Activated naive CD4-positive, alpha-beta T cell treated with anti-CD3 and anti-CD28 coated beads for 36 hours (primary cell): ENCODE measurements at regions of chr2 and their contacts with region 1.

Region 1: DNA sequence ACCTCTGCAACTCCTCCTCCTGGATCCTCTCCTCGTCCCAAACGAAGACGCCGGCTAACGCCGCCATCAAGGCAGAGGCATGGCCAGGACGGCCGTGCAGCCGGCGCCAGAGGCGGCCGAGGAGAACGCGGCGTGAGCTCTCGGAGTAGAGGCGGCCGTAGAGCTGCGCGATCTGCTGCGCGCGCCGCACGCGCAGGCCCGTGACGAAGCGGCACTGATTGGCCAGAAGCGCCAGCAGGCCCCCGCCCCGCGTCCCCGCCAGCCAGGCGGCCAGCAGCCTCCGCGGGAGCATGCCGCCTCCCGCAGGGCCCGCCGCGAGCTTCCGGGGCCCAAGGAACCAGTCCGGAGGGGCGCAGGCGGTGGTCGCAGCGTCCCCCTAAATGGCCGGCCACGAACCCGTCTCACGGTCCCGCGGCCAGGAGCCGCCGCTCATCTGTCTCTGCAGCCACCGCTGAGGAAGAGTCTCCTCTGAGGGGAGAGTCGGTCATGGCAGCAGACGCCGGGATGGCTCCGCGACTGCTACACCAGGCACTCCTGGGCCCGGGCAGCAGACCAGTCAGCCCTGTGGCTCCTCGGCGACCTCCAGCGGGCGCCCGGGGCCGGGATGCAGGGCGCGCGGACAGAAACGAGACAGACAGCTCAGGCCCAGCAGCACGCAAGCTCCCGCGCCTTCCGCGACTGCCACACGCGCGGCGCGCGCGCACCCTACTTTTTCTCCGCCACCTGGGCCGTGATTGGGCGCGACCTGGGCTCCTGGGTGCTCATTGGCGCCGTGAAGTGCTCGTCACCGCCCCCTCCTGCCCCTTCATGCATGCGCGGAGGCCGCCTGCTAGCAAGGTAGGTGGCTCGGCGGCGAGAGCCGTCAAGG is at the start of gene STARD7:
- DNase-seq: peak; percentile 98
- H3K4me3 Mint-ChIP-seq: peak within 1 kb of the TSS; percentile 92
- H3K27ac Mint-ChIP-seq: peak within 1 kb of the TSS; percentile 88
- H3K4me1 Mint-ChIP-seq: peaks cover 48% of the 10 kb centered on the region
- H3K27me3 Mint-ChIP-seq: no peaks in the 10 kb centered on the region
- total RNA-seq, gene STARD7: 84.7 to 87.6 TPM

Region 2: DNA sequence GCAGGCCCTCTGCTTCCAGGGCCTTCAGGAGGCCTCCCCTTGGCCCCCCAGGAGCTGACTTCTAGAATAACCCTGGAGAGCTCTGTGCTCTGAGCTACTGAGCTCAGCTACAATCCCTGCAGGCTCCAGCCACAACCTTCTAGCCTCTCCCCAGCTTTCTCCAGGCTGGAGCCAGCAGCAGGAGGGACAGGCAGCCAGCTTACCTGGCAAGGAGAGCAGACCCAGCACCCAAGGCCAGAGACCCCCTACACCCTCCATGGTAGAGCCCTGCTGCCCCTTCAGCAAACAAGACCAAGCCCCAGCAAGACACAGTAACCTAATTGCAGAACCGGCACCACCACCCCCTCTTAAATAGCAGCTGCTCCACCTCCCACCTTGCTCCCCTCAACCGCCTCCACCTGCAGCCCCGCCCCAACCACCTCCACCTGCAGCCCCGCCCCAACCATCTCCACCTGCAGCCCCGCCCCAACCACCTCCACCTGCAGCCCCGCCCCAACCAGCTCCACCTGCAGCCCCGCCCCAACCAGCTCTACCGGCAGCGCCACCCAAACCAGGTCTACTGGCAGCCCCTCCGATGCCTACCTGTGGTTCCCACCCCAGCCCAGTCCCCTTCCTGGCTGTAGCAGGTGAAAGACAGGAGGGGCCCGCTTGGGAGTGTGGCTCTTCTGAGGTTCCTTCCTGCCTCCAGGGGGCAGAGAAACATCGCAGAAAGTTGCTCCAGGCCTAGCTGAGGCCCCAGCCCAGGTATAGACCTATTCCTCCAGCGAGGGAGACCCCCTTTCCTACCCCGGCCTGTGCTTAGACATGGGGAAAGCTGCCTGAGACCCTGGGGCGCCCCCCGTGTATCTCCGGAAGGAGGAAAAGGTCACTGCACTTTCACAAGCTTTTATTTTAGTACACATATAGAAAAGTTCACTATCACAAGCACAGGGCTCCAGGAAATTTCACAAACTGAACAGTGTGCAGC is 69.9 kb before region 1 on chr2 and contains the start of gene ASTL:
- CTCF ChIA-PET with region 1: interaction called, 8 read pairs
- intact Hi-C with region 1: loop called (anchors 1 kb)
- DNase-seq: peak; percentile 88
- H3K4me3 Mint-ChIP-seq: no peak within 1 kb of the TSS
- H3K27ac Mint-ChIP-seq: peak within 1 kb of the TSS; percentile 82
- H3K4me1 Mint-ChIP-seq: peaks cover 24% of the 10 kb centered on the region
- H3K27me3 Mint-ChIP-seq: no peaks in the 10 kb centered on the region
- total RNA-seq, gene ASTL: 2.5 to 2.6 TPM

Region 3: GRCh38 chr2:96186562-96186961 is 21.8 kb before region 1 on chr2:
- CTCF ChIA-PET with region 1: no interaction called
- intact Hi-C with region 1: no loop called
- DNase-seq: no peak
- H3K4me3 Mint-ChIP-seq: no peak overlapping the region
- H3K27ac Mint-ChIP-seq: no peak overlapping the region
- H3K4me1 Mint-ChIP-seq: no peaks in the 10 kb centered on the region
- H3K27me3 Mint-ChIP-seq: no peaks in the 10 kb centered on the region

Region 4: GRCh38 chr2:96225016-96225533 is 16.7 kb after region 1 on chr2:
- CTCF ChIA-PET with region 1: no interaction called
- intact Hi-C with region 1: no loop called
- DNase-seq: no peak
- H3K4me3 Mint-ChIP-seq: no peak overlapping the region
- H3K27ac Mint-ChIP-seq: no peak overlapping the region
- H3K4me1 Mint-ChIP-seq: peaks cover 4% of the 10 kb centered on the region
- H3K27me3 Mint-ChIP-seq: no peaks in the 10 kb centered on the region

Region 5: GRCh38 chr2:96241900-96242611 is 33.7 kb after region 1 on chr2:
- CTCF ChIA-PET with region 1: interaction called, 4 read pairs
- intact Hi-C with region 1: loop called (anchors 1 kb)
- DNase-seq: peak; percentile 84
- H3K4me3 Mint-ChIP-seq: no peak overlapping the region
- H3K27ac Mint-ChIP-seq: peak overlapping the region; percentile 88
- H3K4me1 Mint-ChIP-seq: peaks cover 43% of the 10 kb centered on the region
- H3K27me3 Mint-ChIP-seq: no peaks in the 10 kb centered on the region

Region 6: DNA sequence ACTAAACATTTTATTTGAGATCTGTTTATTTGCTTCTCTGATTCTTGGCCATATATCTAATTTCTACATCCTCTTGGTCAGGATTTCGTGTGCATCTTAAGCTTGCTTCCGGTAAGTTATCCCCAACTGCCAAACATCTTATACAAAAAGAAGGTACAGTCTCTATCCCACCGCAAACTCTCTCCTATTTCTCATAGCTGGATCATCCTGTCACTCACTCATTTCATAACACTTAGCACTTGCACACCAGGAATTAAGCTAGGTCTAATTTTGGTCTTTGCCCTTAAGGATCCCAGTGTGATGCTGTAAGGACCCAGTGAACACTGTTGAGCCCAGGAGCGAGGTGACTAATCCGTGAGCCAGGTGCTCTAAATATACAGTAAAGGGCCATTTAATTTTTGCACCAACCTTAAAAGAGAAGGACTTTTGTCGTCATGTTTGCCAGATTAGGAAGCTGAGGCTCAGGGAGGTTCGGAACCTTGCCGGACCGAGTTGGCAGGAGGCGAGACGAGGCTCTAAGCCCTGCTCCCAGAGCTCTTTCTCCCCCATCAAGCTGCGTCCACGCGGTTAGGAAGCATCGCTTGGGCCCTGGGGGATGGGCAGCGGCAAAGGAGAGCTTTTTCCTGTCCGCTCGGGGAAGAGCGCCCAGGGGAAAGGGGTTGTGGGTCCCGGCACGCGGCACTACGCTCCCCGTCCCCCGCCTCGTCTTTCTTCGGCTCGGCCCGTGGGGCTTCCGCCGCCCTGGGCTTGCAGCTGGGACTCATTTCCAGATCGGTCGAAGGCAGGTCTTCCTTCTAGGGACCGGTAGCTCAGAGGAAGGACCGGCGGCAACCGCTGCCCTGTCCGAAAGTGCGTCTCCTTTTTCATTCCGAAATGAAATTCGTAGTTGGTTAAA is 112.6 kb after region 1 on chr2:
- CTCF ChIA-PET with region 1: no interaction called
- intact Hi-C with region 1: loop called (anchors 5 kb)
- DNase-seq: peak; percentile 36
- H3K4me3 Mint-ChIP-seq: peak overlapping the region; percentile 88
- H3K27ac Mint-ChIP-seq: peak overlapping the region; percentile 39
- H3K4me1 Mint-ChIP-seq: peaks cover 41% of the 10 kb centered on the region
- H3K27me3 Mint-ChIP-seq: peaks cover 2% of the 10 kb centered on the region

Region 7: DNA sequence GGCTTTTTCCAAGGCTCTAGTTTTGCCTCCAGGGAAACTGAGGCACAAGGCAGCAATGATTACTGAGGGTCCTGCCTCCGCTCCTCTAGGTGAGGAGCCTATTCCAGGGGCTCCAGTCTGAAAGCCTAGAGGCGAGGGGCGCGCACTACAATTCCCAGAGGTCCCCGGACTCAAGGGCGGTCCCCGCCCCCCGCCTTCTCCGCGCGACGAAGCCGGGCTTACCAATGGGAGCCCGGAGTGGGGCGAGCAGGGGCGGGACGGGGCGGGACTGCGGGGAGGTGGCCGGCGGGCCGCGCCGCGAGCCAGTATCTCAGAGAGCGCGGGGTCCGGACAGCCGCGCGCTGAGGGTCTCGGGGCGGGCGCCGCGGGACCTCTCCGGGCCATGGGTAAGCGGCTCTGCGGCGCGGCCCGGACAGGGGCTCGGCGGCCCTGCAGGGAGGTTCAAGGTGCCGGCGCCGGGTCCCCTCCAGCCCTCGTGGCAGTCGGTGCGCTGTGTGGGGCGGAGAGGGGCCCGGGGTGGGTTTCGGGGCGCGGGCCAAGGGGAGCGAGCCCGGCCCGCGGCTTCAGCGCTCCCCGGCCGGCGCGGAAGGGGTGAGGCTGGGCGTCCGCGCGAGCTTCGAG is 328.2 kb after region 1 on chr2 and contains the start of gene ARID5A:
- CTCF ChIA-PET with region 1: no interaction called
- intact Hi-C with region 1: loop called (anchors 2 kb)
- DNase-seq: peak; percentile 96
- H3K4me3 Mint-ChIP-seq: peak within 1 kb of the TSS; percentile 96
- H3K27ac Mint-ChIP-seq: peak within 1 kb of the TSS; percentile 99
- H3K4me1 Mint-ChIP-seq: peaks cover 60% of the 10 kb centered on the region
- H3K27me3 Mint-ChIP-seq: no peaks in the 10 kb centered on the region
- total RNA-seq, gene ARID5A: 349 to 351 TPM